Heart right ventricle (tissue), 16 donors: ENCODE measurements at regions of chr10 and their contacts with region 1.

Region 1: GRCh38 chr10:5595591-5596590 is 70.5 kb downstream of the ASB13 start:
- DNase-seq: no peak
- ATAC-seq: peak in 4 of 8 donors; percentile 28 to 66 (median 46)
- H3K4me3 ChIP-seq: no peak overlapping the region
- H3K27ac ChIP-seq: no peak overlapping the region
- H3K4me1 ChIP-seq: peaks cover 0 to 25% (median 20%) of the 10 kb centered on the region in 9 donors
- H3K27me3 ChIP-seq: no peaks in the 10 kb centered on the region
- CTCF ChIP-seq: no peak

Region 2: GRCh38 chr10:5548527-5549223 is 47.2 kb before region 1 on chr10:
- intact Hi-C with region 1: loop called in 1 of 10 experiments (anchors 5 kb)
- DNase-seq: peak; percentile 43 to 54
- ATAC-seq: peak; percentile 35 to 89 (median 70)
- H3K4me3 ChIP-seq: no peak overlapping the region
- H3K27ac ChIP-seq: peak overlapping the region in 9 of 10 donors; percentile 22 to 71 (median 66)
- H3K4me1 ChIP-seq: peaks cover 3 to 49% (median 36%) of the 10 kb centered on the region in 9 donors
- H3K27me3 ChIP-seq: no peaks in the 10 kb centered on the region
- CTCF ChIP-seq: no peak

Region 3: GRCh38 chr10:6401562-6402348 is 805.9 kb after region 1 on chr10:
- intact Hi-C with region 1: no loop called
- DNase-seq: peak; percentile 48 to 80
- ATAC-seq: peak; percentile 90 to 97 (median 96)
- H3K4me3 ChIP-seq: peak overlapping the region in 8 of 10 donors; percentile 23 to 54 (median 41)
- H3K27ac ChIP-seq: peak overlapping the region in 7 of 10 donors; percentile 21 to 87 (median 38)
- H3K4me1 ChIP-seq: peaks cover 0 to 48% (median 8%) of the 10 kb centered on the region in 9 donors
- H3K27me3 ChIP-seq: peaks cover 0 to 7% (median 0%) of the 10 kb centered on the region in 7 donors
- CTCF ChIP-seq: peak; percentile 57 to 83 (median 76)